GM12878 (cell line): ENCODE measurements at regions of chr2 and their contacts with region 1.

Region 1: DNA sequence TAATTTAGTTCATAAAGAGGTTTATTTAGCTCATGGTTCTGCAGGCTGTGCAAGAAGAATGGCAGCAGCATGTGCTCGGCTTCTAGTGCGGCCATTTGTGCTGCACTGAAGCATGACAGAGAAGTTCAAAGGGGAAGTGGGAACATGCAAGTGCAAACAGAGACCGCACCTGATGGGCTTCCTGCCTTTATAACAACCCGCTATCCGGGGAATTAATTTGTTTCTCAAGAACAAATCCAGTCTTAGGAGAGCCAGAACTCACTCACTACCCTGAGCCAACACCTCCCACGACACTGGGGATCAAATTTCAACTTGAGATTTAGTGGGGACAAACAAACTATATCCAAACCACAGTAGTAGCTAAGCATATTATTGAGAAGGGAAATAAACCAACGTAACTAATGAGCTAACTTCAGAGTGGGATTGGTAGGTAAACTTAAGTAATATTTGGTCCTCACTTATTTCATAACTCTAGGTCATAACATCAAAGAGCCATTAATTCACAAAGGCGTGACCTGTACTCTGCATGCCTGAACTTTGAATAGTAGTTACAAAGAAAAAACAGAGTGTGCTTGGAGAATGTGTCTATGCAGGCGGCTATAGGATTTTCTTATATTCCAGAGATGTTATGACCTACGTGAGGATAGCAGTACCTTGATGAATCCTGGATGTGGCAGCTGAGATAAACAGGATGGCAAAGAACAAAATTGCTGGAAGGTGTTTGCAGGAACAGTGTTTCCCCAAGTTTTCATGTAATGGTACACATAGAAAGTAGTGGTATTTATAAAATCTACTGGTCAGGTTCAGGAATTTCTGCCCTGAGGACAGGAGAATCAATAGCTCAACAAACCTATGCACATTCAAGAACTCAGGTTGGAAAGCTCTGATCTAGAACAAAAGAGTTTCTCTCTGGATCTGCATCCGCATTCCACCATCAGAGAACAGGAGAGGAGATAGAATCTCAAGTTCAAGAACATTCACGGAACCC is 845.9 kb upstream of the ID2 start:
- DNase-seq: peak; percentile 64
- ATAC-seq: peak; percentile 98
- H3K4me3 ChIP-seq: no peak overlapping the region
- H3K27ac ChIP-seq: no peak overlapping the region
- H3K4me1 ChIP-seq: peaks cover 14% of the 10 kb centered on the region
- H3K27me3 ChIP-seq: no peaks in the 10 kb centered on the region
- CTCF ChIP-seq: no peak
- EP300 ChIP-seq: peak in 1 of 2 experiments; percentile 42; a peak in 1 of 4 replicates
- POLR2A ChIP-seq: no peak
- RAD21 ChIP-seq: no peak

Region 2: DNA sequence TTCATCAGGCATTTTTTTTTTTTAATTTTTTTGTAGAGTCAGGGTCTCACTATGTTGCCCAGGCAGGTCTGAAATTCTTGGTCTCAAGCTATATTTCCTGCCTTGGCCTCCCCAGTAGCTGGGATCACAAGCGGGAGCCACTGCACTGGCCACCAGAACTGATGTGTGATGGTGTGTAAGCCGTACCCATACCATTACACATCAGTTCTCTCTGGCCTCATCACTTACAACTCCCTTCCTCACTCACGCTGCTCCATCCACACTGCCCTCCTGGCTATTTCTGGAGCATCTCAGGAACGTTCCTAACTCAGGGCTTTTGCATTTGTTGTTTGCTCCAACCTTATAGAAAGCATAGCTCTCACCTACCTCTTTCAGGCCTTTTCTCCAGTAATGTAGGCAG is 11.3 kb after region 1 on chr2:
- CTCF ChIA-PET with region 1: interaction called, 7 read pairs
- POLR2A ChIA-PET with region 1: interaction called, 4 read pairs
- RAD21 ChIA-PET with region 1: no interaction called
- SMC1A ChIA-PET with region 1: interaction called, 25 read pairs
- in situ Hi-C with region 1: no loop called
- intact Hi-C with region 1: no loop called
- DNase-seq: no peak
- ATAC-seq: peak; percentile 21
- H3K4me3 ChIP-seq: no peak overlapping the region
- H3K27ac ChIP-seq: no peak overlapping the region
- H3K4me1 ChIP-seq: peaks cover 6% of the 10 kb centered on the region; the same call in 1 of the 2 replicates
- H3K27me3 ChIP-seq: no peaks in the 10 kb centered on the region
- CTCF ChIP-seq: no peak
- EP300 ChIP-seq: no peak
- POLR2A ChIP-seq: no peak
- RAD21 ChIP-seq: no peak

Region 3: DNA sequence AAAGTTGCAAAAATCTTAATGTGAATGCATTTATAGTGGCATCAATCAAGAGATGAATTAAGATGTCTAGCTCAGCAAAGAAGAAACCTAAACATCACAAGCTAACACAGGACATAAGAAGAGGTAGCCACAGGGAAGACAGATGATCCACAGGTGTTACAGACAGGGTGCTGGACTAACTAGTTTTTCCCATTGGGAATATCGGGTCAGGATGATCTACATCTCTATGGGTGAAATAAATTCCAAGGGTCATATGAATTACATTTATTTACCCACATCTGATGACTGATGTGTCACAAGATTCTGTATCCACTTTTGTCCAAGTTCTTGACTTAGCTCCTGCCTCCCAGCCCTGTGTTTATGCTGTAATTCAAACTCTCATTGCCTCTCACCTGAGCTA is 34.1 kb after region 1 on chr2:
- CTCF ChIA-PET with region 1: no interaction called
- POLR2A ChIA-PET with region 1: no interaction called
- RAD21 ChIA-PET with region 1: no interaction called
- SMC1A ChIA-PET with region 1: no interaction called
- in situ Hi-C with region 1: no loop called
- intact Hi-C with region 1: no loop called
- DNase-seq: no peak
- ATAC-seq: no peak
- H3K4me3 ChIP-seq: no peak overlapping the region
- H3K27ac ChIP-seq: no peak overlapping the region
- H3K4me1 ChIP-seq: no peaks in the 10 kb centered on the region
- H3K27me3 ChIP-seq: no peaks in the 10 kb centered on the region
- CTCF ChIP-seq: no peak
- EP300 ChIP-seq: no peak
- POLR2A ChIP-seq: no peak
- RAD21 ChIP-seq: no peak